Activated CD8-positive, alpha-beta T cell treated with anti-CD3 and anti-CD28 coated beads for 36 hours (primary cell): ENCODE measurements at regions of chr3 and their contacts with region 1.

Region 1: DNA sequence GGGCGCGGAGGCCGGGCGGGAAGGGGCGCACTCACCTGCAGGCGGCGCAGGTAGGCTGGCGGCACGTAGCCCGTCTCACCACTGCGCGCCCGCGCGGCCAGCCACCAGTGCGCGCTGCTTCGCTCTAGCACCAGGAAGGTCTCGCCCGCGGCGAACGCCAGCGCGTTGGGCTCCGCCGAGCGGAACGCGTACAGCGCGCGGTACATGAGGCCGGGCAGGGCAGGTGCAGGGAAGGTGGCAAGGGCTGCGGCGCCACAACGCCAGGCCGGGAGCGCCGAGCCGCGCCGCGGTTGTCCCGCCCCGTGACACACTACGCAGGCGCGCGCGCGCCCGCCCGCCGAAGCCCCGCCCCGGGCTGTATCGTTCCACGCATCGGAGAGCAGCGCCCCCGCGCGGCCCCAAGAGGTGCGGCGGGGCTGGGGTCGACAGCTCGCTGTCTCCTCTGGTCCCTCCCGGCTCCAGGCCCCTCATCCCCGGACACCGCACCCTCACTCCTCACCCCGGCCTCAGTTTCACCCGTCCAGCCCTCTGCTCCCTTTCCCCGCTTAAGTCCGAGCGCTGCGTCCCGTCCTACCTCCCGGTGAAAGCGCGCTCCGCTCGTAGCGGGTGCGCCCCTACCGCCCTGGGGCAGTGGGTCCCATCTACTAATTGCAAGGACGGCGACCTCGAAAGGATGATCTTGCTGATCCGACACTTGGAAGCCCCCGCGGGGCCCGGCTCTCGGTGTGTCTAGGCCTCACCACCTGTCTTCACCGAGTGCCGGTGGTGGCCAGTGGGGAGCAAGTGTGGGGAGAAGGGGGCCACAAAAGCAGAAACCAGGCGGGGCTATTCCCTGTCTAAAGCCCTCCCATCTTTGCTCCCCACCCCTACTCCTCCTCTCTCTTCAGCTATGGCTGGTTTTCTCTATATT is at the start of gene NCKIPSD:
- DNase-seq: peak; percentile 94
- ATAC-seq: peak; percentile 96
- H3K4me3 Mint-ChIP-seq: peak within 1 kb of the TSS; percentile 92
- H3K27ac Mint-ChIP-seq: peak within 1 kb of the TSS; percentile 87
- H3K4me1 Mint-ChIP-seq: peaks cover 28% of the 10 kb centered on the region
- H3K27me3 Mint-ChIP-seq: no peaks in the 10 kb centered on the region
- CTCF ChIP-seq: peak; percentile 91
- total RNA-seq, gene NCKIPSD: 69.7 to 73.8 TPM

Region 2: DNA sequence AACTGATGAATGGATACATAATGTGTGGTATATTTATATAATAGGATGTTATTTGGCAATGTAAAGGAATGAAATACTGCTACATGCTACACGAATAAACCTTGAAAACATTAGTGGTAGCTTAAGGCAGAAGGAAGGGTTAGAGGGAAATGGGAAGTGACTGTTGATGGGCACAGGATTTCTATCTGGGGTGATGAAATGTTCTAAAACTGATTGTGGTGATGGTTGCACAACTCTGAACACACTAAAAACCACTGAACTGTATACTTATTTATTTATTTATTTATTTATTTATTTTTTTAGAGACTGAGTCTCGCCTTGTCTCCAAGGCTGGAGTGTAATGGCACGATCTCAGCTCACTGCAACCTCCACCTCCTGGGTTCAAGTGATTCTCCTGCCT is 157.1 kb before region 1 on chr3:
- CTCF ChIA-PET with region 1: no interaction called
- POLR2A ChIA-PET with region 1: no interaction called
- intact Hi-C with region 1: no loop called
- DNase-seq: no peak
- ATAC-seq: no peak
- H3K4me3 Mint-ChIP-seq: no peak overlapping the region
- H3K27ac Mint-ChIP-seq: no peak overlapping the region
- H3K4me1 Mint-ChIP-seq: no peaks in the 10 kb centered on the region
- H3K27me3 Mint-ChIP-seq: no peaks in the 10 kb centered on the region
- CTCF ChIP-seq: no peak

Region 3: GRCh38 chr3:48700731-48701405 is 15.0 kb after region 1 on chr3:
- CTCF ChIA-PET with region 1: interaction called, 20 read pairs
- POLR2A ChIA-PET with region 1: interaction called, 4 read pairs
- intact Hi-C with region 1: no loop called
- DNase-seq: no peak
- ATAC-seq: no peak
- H3K4me3 Mint-ChIP-seq: no peak overlapping the region
- H3K27ac Mint-ChIP-seq: peak overlapping the region; percentile 37
- H3K4me1 Mint-ChIP-seq: peaks cover 45% of the 10 kb centered on the region
- H3K27me3 Mint-ChIP-seq: no peaks in the 10 kb centered on the region
- CTCF ChIP-seq: no peak

Region 4: DNA sequence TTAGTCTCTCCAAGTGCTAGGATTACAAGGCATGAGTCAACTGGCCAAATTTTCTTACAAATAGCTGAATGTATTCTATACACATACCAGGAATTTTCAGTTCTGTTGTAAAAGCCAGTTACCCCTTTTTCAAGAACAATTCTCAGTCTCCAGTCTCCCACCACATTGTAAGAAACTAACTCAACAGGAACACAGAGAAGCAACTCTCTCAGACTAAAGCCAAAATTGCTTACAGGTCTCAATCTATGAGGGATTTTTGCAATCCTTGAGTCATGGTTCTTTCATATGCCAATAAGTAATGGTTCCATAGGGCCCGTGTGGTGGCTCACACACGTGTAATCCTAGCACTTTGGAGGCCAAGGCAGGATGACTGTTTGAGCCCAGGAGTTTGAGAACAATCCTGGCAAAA is 22.6 kb after region 1 on chr3:
- CTCF ChIA-PET with region 1: interaction called, 20 read pairs
- POLR2A ChIA-PET with region 1: no interaction called
- intact Hi-C with region 1: no loop called
- DNase-seq: no peak
- ATAC-seq: peak; percentile 41
- H3K4me3 Mint-ChIP-seq: no peak overlapping the region
- H3K27ac Mint-ChIP-seq: peak overlapping the region; percentile 79
- H3K4me1 Mint-ChIP-seq: peaks cover 59% of the 10 kb centered on the region
- H3K27me3 Mint-ChIP-seq: no peaks in the 10 kb centered on the region
- CTCF ChIP-seq: no peak